ENCODE measurements at regions of chr1 and their contacts with region 1.

Region 1: GRCh38 chr1:153946622-153947241 is at the start of gene DENND4B:
- DNase-seq: peak; percentile 98

Region 2: DNA sequence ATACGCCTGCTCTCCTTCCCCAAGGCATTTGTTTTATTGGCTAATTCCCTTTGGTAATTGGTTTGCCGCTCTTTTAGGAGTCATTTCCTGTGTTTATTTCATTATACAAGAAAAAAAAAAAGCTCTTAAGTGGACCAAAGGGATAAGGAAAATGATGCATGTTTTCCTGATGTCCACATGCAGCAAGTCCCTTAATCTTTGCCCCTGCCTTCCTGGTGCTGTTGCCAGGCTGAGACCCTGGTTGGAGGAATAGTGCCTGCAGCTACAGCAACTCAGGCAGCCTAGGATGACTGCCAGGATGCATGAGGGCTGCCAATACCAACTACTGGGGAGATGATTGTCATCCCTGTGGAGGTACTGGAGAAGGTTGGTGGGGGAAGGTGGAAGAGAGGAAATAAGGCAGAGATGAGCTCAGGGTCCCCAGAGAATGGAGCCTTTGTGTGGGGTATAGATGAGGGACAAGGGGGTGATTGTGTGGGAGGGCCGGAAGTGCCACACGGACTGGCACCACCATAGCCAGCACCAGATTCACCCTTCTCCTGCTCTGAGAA is 17.9 kb before region 1 on chr1:
- CTCF ChIA-PET with region 1: interaction called, 9 read pairs
- POLR2A ChIA-PET with region 1: interaction called, 40 read pairs
- DNase-seq: no peak

Region 3: DNA sequence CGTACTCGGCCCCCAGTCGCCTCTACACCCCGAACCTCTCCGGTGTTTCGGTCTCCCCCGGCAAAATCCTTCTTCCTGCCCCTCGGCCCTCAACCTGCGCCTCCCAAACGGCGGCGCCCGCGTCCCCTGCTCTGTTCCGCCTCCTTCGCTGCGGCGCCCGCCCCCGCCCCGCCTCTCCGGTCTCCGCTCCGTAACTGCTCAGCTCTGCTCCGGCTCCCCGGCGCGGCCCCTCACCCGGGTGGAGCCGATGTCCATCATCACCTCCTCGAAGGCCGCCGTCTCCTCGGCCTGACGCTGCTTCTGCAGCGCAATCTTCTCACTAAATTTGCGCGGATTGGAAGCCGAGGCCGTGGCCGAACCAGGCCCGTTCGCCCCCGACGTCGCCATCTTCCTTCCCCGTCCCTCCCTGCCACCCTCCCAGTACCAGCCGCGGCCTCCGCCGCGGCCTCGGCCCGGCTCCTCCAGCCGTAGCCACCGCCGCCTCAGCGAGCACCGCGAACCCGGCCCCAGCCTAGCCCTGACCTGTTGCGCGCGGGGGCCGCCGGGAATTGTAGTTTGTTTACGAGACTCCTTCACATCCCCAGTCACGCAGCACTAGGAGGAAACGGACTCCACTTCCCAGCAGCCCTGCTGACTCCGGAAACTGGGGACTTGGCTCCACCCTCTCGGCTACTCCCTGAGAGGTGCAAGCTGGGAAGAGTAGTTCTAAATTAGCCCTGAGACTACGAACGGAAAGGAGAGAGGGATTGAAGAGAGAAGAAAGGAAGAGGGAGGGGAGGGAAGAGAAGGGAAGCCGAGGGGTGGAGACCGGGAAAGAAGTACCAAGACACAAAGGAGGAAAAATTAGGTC is 11.6 kb after region 1 on chr1 and contains the start of gene CRTC2:
- CTCF ChIA-PET with region 1: interaction called, 9 read pairs
- POLR2A ChIA-PET with region 1: interaction called, 38 read pairs
- DNase-seq: peak; percentile 97